Heart right ventricle (tissue), 16 donors: ENCODE measurements at regions of chrX and their contacts with region 1.

Region 1: DNA sequence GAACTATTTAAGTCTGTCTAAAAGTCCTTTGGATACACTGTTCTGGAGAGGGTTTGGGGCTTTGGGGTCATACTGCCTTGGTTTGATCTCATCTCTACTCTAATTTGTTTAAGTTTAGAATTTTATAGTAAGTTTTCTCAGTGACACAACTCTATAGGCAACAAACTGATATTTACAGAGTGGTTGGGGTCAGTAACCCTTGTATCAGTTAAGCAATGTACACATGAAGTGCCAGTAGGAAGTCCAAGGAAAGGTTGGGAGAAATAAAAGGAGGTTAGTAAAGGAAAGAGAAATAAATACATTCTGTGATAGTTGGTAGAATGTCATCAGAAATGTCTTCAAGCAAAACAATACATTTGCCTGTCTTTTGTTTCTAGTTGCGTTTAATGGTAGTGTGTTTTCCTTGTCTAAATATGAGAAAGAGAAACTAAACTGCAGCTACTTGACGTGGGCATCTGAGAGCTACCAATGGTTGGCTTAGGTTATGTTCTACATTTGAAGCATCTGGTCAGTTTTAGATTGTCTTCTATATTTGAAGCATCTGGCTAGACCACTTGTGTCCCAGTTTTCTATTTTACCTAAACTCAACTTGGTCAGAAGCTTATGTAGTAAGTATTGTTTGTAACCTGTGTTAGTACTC is 6.9 kb downstream of the ATP7A start:
- DNase-seq: no peak
- ATAC-seq: no peak
- H3K4me3 ChIP-seq: no peak overlapping the region
- H3K27ac ChIP-seq: peak overlapping the region in 1 of 10 donors; percentile 5
- H3K4me1 ChIP-seq: peaks cover 0 to 26% (median 6%) of the 10 kb centered on the region in 9 donors
- H3K27me3 ChIP-seq: peaks cover 0 to 4% (median 0%) of the 10 kb centered on the region in 7 donors
- CTCF ChIP-seq: no peak

Region 2: GRCh38 chrX:77556276-77556675 is 361.1 kb before region 1 on chrX:
- intact Hi-C with region 1: no loop called
- DNase-seq: no peak
- ATAC-seq: no peak
- H3K4me3 ChIP-seq: no peak overlapping the region
- H3K27ac ChIP-seq: no peak overlapping the region
- H3K4me1 ChIP-seq: no peaks in the 10 kb centered on the region
- H3K27me3 ChIP-seq: no peaks in the 10 kb centered on the region
- CTCF ChIP-seq: no peak

Region 3: DNA sequence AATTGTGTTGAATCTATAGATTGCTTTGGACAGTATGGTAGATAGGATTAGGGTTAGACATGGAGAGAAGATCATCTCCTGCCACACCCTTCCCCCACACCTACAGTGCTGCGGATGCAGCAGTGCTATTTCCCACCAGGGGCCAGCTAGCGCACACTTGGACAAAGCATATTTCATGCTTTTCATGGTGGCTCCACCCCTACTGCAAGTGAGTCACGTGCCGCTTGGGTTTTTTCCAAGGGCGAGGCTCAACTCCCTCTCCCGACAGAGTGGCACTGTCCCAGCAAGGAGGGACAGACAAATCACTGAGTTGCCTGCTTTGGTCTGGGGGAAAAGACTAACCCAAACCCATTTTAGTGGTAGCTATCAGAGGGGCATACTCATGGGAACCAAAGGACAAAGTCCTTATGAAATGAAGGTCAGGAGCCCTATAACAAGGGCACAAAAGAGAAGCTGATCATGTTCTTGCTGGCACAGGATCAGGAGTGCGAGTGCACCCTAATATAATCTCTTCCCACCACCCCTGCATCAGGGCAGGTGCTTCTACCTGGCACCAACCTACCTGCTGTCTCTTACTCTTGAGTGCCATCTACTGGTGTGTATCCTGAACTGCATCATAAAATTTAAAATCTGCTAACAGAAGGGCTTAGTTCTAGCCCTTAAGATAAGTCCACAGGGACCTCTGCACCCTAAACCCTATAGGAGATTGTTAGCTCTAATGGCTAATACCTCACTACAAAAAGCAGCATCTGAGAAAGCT is 107.1 kb after region 1 on chrX:
- intact Hi-C with region 1: loop called in 5 of 10 experiments (anchors 5 to 10 kb)
- DNase-seq: peak in 1 of 2 donors; percentile 8
- ATAC-seq: no peak
- H3K4me3 ChIP-seq: no peak overlapping the region
- H3K27ac ChIP-seq: no peak overlapping the region
- H3K4me1 ChIP-seq: no peaks in the 10 kb centered on the region
- H3K27me3 ChIP-seq: peaks cover 0 to 9% (median 0%) of the 10 kb centered on the region in 7 donors
- CTCF ChIP-seq: peak; percentile 12 to 59 (median 45)